ENCODE measurements at regions of chr3 and their contacts with region 1.

Region 1: DNA sequence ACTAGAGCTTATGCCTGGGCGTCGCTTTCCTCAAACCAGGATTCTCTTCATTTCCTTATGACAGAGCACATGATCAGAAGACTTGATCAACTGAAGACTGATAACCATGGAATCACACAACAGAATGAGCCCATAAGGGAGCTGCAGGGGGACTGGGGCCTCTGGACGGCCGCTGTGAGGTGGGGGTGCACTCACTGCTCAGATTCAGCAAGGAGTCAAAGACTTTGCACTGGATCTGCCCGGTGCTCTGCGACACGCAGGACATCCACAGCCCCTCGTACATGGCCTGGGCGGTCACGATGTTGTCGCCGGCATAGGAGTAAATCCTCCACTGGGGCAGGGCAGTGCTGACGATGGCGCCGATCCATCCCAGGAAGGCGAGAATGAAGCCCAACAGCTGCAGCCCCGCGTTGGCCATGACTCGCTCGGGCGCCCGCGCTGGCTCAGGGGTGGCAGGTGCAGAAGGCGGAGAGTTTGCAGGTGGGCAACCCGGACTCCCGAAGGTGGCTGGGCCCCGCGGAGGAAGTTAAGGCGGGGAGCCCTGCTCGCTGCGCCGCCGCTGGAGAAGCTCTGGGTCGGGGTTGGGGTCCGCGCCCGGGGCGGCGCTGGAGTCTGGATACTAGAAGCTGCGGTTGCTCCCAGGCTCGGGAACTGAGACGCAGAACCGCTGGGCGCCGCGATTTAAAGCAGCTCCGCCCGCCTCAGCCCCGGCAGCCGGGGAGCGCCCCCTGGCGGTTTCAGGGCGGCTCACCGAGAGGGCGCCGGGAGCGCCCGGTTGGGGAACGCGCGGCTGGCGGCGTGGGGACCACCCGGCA is at the start of gene CLDN1:
- DNase-seq: peak; percentile 98
- H3K4me3 Mint-ChIP-seq: peak within 1 kb of the TSS; percentile 81
- H3K27ac Mint-ChIP-seq: peak within 1 kb of the TSS; percentile 89
- H3K4me1 Mint-ChIP-seq: peaks cover 45% of the 10 kb centered on the region
- H3K27me3 Mint-ChIP-seq: no peaks in the 10 kb centered on the region
- CTCF ChIP-seq: peak; percentile 99
- total RNA-seq, gene CLDN1: 204 and 253 TPM in 2 replicates

Region 2: DNA sequence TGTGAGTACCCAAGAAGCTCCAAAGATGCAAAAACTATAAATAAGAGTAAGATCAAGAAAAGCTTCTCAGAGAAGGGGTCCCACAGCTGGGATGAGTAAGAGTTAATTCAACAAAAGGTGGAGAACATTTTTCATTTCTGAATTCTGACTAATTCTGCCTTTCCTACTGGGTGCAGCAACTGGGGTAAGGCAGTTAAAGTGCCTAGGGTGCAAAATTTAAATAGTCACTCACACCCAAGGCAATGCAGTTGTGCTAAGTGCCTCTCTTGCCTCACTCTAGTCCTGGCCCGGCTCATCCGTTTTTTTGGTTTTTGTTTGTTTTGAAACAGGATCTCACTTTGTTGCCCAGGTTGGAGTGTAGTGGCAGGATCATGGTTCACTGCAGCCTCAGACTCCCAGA is 450.6 kb before region 1 on chr3:
- CTCF ChIA-PET with region 1: no interaction called
- intact Hi-C with region 1: no loop called
- DNase-seq: no peak
- H3K4me3 Mint-ChIP-seq: no peak overlapping the region
- H3K27ac Mint-ChIP-seq: no peak overlapping the region
- H3K4me1 Mint-ChIP-seq: no peaks in the 10 kb centered on the region
- H3K27me3 Mint-ChIP-seq: no peaks in the 10 kb centered on the region
- CTCF ChIP-seq: no peak

Region 3: GRCh38 chr3:189961525-189962161 is 360.4 kb before region 1 on chr3:
- CTCF ChIA-PET with region 1: interaction called, 8 read pairs
- intact Hi-C with region 1: loop called (anchors 2 kb)
- DNase-seq: peak; percentile 91
- H3K4me3 Mint-ChIP-seq: no peak overlapping the region
- H3K27ac Mint-ChIP-seq: no peak overlapping the region
- H3K4me1 Mint-ChIP-seq: peaks cover 11% of the 10 kb centered on the region
- H3K27me3 Mint-ChIP-seq: no peaks in the 10 kb centered on the region
- CTCF ChIP-seq: peak; percentile 90

Region 4: GRCh38 chr3:190120269-190121060 is 201.5 kb before region 1 on chr3 and contains the start of gene P3H2:
- CTCF ChIA-PET with region 1: interaction called, 5 read pairs
- intact Hi-C with region 1: loop called (anchors 10 kb)
- DNase-seq: peak; percentile 94
- H3K4me3 Mint-ChIP-seq: peak within 1 kb of the TSS; percentile 63
- H3K27ac Mint-ChIP-seq: peak within 1 kb of the TSS; percentile 13
- H3K4me1 Mint-ChIP-seq: peaks cover 88% of the 10 kb centered on the region
- H3K27me3 Mint-ChIP-seq: peaks cover 21% of the 10 kb centered on the region
- CTCF ChIP-seq: peak; percentile 7
- total RNA-seq, gene P3H2: 5.9 and 7.1 TPM in 2 replicates

Region 5: DNA sequence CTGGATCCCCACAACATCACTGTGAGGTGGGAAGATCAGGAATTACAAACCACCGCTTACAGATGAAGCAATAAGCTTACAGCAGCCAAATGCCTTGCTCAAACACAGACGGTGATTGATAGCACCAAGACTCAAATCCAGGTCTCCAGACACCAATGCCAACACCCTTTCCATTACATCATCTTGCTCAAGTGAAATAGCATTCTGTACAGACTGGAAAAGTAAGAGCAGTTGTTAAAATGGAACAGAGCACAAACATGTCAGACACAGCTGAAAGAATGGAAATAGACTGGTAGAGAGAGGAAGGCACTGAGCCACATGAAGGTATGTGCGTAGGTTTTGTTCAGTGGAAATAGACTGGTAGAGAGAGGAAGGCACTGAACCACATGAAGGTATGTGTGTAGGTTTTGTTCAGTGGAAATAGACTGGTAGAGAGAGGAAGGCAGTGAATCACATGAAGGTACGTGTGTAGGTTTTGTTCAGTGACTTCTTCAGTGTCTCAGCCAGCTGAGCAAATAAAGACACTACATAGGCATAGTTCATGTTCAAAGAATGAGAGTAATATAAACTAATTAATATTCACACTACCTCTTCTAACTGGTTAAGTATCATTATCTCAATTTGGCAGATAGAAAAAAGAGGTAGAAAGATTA is 15.4 kb before region 1 on chr3:
- CTCF ChIA-PET with region 1: interaction called, 12 read pairs
- intact Hi-C with region 1: loop called (anchors 1 kb)
- DNase-seq: peak; percentile 67
- H3K4me3 Mint-ChIP-seq: peak overlapping the region; percentile 51
- H3K27ac Mint-ChIP-seq: peak overlapping the region; percentile 90
- H3K4me1 Mint-ChIP-seq: peaks cover 61% of the 10 kb centered on the region
- H3K27me3 Mint-ChIP-seq: no peaks in the 10 kb centered on the region
- CTCF ChIP-seq: no peak

Region 6: GRCh38 chr3:190345027-190345821 is 23.2 kb after region 1 on chr3:
- CTCF ChIA-PET with region 1: interaction called, 37 read pairs
- intact Hi-C with region 1: loop called (anchors 1 kb)
- DNase-seq: peak; percentile 66
- H3K4me3 Mint-ChIP-seq: peak overlapping the region; percentile 51
- H3K27ac Mint-ChIP-seq: peak overlapping the region; percentile 98
- H3K4me1 Mint-ChIP-seq: peaks cover 51% of the 10 kb centered on the region
- H3K27me3 Mint-ChIP-seq: no peaks in the 10 kb centered on the region
- CTCF ChIP-seq: no peak

Region 7: GRCh38 chr3:190424478-190425439 is 102.8 kb after region 1 on chr3:
- CTCF ChIA-PET with region 1: interaction called, 3 read pairs
- intact Hi-C with region 1: loop called (anchors 2 kb)
- DNase-seq: peak; percentile 86
- H3K4me3 Mint-ChIP-seq: peak overlapping the region; percentile 44
- H3K27ac Mint-ChIP-seq: peak overlapping the region; percentile 94
- H3K4me1 Mint-ChIP-seq: peaks cover 12% of the 10 kb centered on the region
- H3K27me3 Mint-ChIP-seq: no peaks in the 10 kb centered on the region
- CTCF ChIP-seq: peak; percentile 69

Region 8: GRCh38 chr3:190513409-190514162 is 191.6 kb after region 1 on chr3 and contains the start of gene IL1RAP:
- CTCF ChIA-PET with region 1: interaction called, 5 read pairs
- intact Hi-C with region 1: loop called (anchors 5 kb)
- DNase-seq: peak; percentile 98
- H3K4me3 Mint-ChIP-seq: peak within 1 kb of the TSS; percentile 90
- H3K27ac Mint-ChIP-seq: peak within 1 kb of the TSS; percentile 90
- H3K4me1 Mint-ChIP-seq: peaks cover 38% of the 10 kb centered on the region
- H3K27me3 Mint-ChIP-seq: no peaks in the 10 kb centered on the region
- CTCF ChIP-seq: peak; percentile 92
- total RNA-seq, gene IL1RAP: 186 and 239 TPM in 2 replicates